ENCODE measurements at regions of chr16 and their contacts with region 1.

Region 1: DNA sequence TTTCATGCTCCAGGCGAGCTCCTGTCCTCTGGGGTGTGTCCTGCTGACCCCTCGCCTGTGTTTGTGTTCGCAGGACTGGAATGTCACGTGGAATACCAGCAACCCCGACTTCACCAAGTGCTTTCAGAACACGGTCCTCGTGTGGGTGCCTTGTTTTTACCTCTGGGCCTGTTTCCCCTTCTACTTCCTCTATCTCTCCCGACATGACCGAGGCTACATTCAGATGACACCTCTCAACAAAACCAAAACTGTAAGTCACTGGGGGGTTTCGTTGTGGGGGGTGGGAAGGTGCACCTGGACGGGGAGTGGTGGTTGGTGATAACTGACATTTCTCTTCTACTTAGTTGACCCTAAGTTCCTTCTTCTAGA is 58.3 kb downstream of the ABCC1 start:
- DNase-seq: peak; percentile 91
- ATAC-seq: peak; percentile 81
- H3K4me3 ChIP-seq: peak overlapping the region in 4 of 5 experiments; percentile 0 to 46 (median 22)
- H3K4me3 Mint-ChIP-seq: peak overlapping the region; percentile 75
- H3K27ac ChIP-seq: peak overlapping the region; percentile 94 to 96
- H3K27ac Mint-ChIP-seq: peak overlapping the region; percentile 99
- H3K4me1 ChIP-seq: peaks cover 30 to 42% of the 10 kb centered on the region in 2 donors
- H3K4me1 Mint-ChIP-seq: peaks cover 45% of the 10 kb centered on the region
- H3K27me3 ChIP-seq: no peaks in the 10 kb centered on the region
- H3K27me3 Mint-ChIP-seq: no peaks in the 10 kb centered on the region
- CTCF ChIP-seq: no peak

Region 2: GRCh38 chr16:15888072-15888976 is 119.4 kb before region 1 on chr16 and contains the start of gene CEP20:
- CTCF ChIA-PET with region 1: interaction called, 15 read pairs
- POLR2A ChIA-PET with region 1: no interaction called
- intact Hi-C with region 1: loop called (anchors 1 kb)
- DNase-seq: peak; percentile 100
- ATAC-seq: peak; percentile 98
- H3K4me3 ChIP-seq: peak within 1 kb of the TSS; percentile 66 to 99 (median 96)
- H3K4me3 Mint-ChIP-seq: peak within 1 kb of the TSS; percentile 95
- H3K27ac ChIP-seq: peak within 1 kb of the TSS; percentile 64 to 76
- H3K27ac Mint-ChIP-seq: peak within 1 kb of the TSS; percentile 95
- H3K4me1 ChIP-seq: peaks cover 14 to 16% of the 10 kb centered on the region in 2 donors
- H3K4me1 Mint-ChIP-seq: peaks cover 31% of the 10 kb centered on the region
- H3K27me3 ChIP-seq: no peaks in the 10 kb centered on the region
- H3K27me3 Mint-ChIP-seq: no peaks in the 10 kb centered on the region
- CTCF ChIP-seq: no peak
- total RNA-seq, gene CEP20: 29.3 and 30.2 TPM in 2 replicates

Region 3: GRCh38 chr16:15961060-15961511 is 46.6 kb before region 1 on chr16:
- CTCF ChIA-PET with region 1: interaction called, 6 read pairs
- POLR2A ChIA-PET with region 1: no interaction called
- intact Hi-C with region 1: loop called (anchors 1 kb)
- DNase-seq: peak; percentile 72
- ATAC-seq: peak; percentile 85
- H3K4me3 ChIP-seq: peak overlapping the region in 2 of 5 experiments; percentile 15 to 25
- H3K4me3 Mint-ChIP-seq: peak overlapping the region; percentile 66
- H3K27ac ChIP-seq: peak overlapping the region; percentile 12 to 76
- H3K27ac Mint-ChIP-seq: peak overlapping the region; percentile 84
- H3K4me1 ChIP-seq: peaks cover 20 to 25% of the 10 kb centered on the region in 2 donors
- H3K4me1 Mint-ChIP-seq: peaks cover 41% of the 10 kb centered on the region
- H3K27me3 ChIP-seq: no peaks in the 10 kb centered on the region
- H3K27me3 Mint-ChIP-seq: no peaks in the 10 kb centered on the region
- CTCF ChIP-seq: no peak

Region 4: DNA sequence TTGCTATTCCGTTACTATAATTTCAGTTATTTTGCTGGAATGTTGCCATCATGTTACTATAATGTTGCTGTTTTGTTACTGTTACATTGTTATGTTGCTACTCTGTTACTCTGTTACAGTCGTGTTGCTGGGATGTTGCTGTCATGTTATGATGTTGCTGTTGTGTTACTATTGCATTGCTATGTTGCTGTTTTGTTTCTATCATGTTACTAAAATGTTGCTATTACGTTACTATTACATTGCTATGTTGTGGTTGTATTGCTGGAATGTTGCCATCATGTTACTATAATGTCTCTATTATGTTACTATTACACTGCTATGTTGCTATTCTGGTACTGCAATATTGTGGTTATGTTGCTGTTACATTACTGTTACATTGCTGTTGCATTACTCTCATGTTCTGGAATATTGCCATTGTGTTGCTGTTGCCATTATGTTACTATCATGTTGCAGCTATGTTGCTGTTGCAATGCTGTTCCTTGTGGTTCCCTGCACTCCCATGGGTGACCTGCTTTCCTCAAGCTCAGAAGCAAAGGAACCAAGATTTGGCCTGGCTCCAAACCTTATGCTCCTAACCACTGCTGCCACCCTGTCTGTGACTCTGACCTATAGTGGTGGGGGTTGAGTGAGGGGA is 151.1 kb after region 1 on chr16:
- CTCF ChIA-PET with region 1: no interaction called
- POLR2A ChIA-PET with region 1: no interaction called
- intact Hi-C with region 1: no loop called
- DNase-seq: no peak
- ATAC-seq: no peak
- H3K4me3 ChIP-seq: no peak overlapping the region
- H3K4me3 Mint-ChIP-seq: no peak overlapping the region
- H3K27ac ChIP-seq: no peak overlapping the region
- H3K27ac Mint-ChIP-seq: no peak overlapping the region
- H3K4me1 ChIP-seq: no peaks in the 10 kb centered on the region
- H3K4me1 Mint-ChIP-seq: no peaks in the 10 kb centered on the region
- H3K27me3 ChIP-seq: no peaks in the 10 kb centered on the region
- H3K27me3 Mint-ChIP-seq: peaks cover 5% of the 10 kb centered on the region
- CTCF ChIP-seq: no peak